ENCODE measurements at regions of chr20 and their contacts with region 1.

Region 1: DNA sequence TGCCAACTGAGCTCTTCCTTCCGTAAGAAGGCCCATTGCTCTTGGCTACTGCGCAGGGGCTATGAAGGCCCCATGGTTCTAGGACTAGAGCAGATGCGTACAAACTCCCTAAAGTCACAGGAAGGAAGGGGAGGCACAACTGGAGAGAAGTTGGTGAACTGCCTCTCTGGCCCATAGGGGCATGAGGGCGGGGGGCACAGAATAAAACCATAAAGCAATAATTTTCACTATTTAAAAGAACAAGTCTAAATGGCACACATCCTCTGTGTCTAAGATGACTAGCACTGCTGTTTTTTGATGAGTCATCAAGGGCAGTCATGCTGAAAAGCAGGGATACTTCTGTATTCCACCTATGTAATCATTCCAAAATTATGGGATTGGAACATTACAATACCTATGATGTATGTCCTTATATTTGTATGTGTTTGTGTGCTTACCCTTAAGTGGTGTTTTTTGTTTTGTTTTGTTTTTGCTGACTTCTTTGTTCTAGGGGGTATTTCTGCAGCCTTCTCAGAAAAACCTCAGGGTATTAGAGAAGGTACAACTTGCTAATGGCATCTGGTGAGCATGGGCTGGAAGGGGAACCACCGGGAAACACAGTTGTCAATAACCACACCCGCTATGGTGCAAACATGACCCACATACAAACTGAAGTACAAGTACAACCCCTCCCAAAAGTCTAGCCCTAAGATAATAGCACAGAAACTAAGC is 36.9 kb downstream of the B4GALT5 start:
- DNase-seq: no peak
- ATAC-seq: peak; percentile 88
- H3K4me3 ChIP-seq: no peak overlapping the region
- H3K4me3 Mint-ChIP-seq: peak overlapping the region in 2 of 10 donors; percentile 9 to 81
- H3K27ac ChIP-seq: no peak overlapping the region
- H3K27ac Mint-ChIP-seq: peak overlapping the region in 2 of 9 donors; percentile 6 to 83
- H3K4me1 ChIP-seq: peaks cover 0 to 66% of the 10 kb centered on the region in 2 donors
- H3K4me1 Mint-ChIP-seq: peaks cover 10 to 79% (median 32%) of the 10 kb centered on the region in 7 donors
- H3K27me3 ChIP-seq: no peaks in the 10 kb centered on the region
- H3K27me3 Mint-ChIP-seq: no peaks in the 10 kb centered on the region

Region 2: DNA sequence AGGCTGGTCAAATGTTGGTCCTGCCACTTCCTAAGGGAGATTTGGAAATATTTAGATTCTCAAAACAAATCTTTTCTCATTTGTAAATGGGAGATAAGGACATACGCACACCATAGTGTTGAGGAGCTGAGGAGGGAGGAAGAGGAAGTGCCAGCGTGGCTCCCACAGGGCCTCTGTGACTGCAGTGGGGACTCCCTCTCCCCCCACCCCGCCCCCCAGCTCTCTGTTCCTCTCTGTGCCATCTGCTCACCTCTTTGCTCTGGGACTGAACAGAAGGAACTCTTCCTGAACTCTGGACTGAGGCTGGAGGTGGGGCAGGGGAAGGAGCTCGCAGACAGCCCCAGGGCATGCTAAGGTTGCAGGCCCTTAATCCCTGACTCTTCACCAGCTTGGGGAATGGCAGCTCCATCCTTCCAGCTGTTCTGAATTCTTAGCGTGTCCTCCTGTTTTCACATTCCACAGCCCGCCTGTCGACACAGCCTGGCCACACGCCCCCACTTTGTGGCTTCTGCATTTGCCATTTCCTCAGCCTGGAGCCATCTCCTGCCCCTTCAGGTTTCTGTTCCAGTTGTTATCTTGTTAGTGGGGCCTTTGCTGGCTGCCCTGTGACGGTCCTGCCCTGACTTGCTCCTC is 446.1 kb before region 1 on chr20:
- CTCF ChIA-PET with region 1: no interaction called
- POLR2A ChIA-PET with region 1: no interaction called
- intact Hi-C with region 1: no loop called
- DNase-seq: no peak
- ATAC-seq: peak; percentile 70
- H3K4me3 ChIP-seq: no peak overlapping the region
- H3K4me3 Mint-ChIP-seq: no peak overlapping the region
- H3K27ac ChIP-seq: no peak overlapping the region
- H3K27ac Mint-ChIP-seq: peak overlapping the region in 4 of 9 donors; percentile 2 to 66 (median 43)
- H3K4me1 ChIP-seq: no peaks in the 10 kb centered on the region
- H3K4me1 Mint-ChIP-seq: peaks cover 0 to 10% (median 5%) of the 10 kb centered on the region in 7 donors
- H3K27me3 ChIP-seq: no peaks in the 10 kb centered on the region
- H3K27me3 Mint-ChIP-seq: no peaks in the 10 kb centered on the region

Region 3: DNA sequence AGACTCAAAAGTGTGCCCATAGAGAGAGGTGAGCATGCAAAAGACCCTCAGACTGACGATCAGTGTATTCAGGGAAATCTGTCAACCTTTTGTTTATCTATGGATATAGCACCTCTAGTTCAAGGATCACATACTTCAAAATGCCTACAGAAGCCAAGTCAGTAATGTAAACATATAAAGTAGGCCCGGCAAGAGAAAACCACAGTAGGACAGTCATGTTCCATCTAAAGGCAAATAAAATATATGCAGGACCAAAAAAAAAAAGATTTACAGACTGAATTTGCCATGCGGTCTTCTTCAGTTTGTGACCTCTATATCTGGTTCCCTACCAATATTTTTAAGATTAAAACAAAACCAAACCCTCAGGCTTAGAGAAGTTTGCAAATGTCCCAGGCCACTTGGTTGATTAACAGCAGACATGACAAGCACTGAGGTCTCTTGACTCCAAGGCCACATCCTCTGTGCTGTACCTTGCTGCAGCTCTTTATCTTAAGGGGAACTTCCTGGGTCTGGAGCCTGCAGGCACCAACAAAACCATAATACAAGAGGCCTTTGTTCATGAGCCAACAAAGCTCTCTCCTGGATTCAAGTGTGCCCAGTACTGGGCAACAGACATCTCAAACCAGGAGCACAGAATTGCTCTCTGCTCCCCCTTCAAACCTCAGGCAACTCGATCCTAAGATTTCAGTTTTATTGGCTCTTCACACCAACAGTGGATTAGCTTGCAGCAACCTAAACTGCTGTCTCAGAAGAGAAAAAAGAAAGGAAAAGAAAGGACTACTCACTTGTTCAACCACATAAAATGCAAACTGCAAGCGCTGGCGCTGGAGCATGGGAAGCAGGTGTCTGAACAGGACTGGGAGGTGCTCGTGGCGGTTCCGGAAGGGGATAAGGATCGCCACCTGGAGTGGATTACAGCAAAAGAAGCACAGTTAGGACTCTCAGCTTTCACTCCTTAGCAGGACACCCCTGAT is 34.8 kb before region 1 on chr20:
- CTCF ChIA-PET with region 1: no interaction called
- POLR2A ChIA-PET with region 1: no interaction called
- intact Hi-C with region 1: loop called in 1 of 2 experiments (anchors 5 kb)
- DNase-seq: no peak
- ATAC-seq: no peak
- H3K4me3 ChIP-seq: no peak overlapping the region
- H3K4me3 Mint-ChIP-seq: peak overlapping the region in 1 of 10 donors; percentile 14
- H3K27ac ChIP-seq: no peak overlapping the region
- H3K27ac Mint-ChIP-seq: peak overlapping the region in 2 of 9 donors; percentile 59 to 79
- H3K4me1 ChIP-seq: no peaks in the 10 kb centered on the region
- H3K4me1 Mint-ChIP-seq: peaks cover 0 to 20% (median 0%) of the 10 kb centered on the region in 7 donors
- H3K27me3 ChIP-seq: no peaks in the 10 kb centered on the region
- H3K27me3 Mint-ChIP-seq: no peaks in the 10 kb centered on the region

Region 4: DNA sequence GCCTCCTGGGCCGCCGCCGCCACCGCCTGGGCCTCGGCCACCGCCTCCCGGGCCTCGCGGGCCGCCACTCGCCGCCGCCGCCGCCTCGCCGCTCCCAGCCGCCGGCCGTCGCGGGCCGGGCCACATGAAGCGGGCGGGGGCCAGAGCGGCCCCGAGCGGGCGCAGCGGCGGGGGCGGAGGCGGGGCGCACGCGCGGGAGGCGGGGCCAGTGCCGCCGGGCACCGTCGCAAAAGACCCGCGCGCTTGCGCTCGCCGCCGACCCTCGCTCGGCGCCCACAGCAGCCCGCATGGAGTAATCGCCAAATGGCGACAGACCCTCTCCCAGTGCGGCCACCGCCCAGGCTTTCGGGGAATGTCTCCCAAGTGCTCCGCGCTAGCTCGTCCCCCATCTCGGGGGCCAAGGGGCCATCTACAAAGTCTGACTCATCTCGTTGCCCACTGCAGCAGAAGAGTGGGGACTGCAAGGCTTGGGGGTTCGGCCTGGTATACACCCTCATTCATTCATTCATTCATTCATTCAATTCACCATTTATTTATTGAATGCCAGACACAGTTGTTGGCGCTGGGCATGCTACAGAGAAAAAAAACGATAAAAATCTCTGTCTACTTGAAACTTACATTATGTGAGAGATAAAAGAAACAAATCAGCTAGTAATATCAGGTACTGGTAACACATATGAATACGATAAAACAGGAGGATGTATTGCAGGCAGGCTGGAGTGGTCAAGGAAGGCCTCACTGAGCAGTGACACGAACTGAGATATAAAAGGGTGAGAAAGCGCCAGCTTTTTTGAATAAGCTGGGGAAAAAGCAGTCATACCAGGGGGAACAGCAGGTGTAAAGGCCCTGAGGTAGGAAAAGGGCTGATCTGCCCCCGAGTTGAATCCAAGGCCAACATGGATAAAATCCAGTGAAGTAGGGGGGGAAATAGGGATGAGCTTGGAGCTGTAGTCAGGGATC is 37.3 kb after region 1 on chr20 and contains the start of gene B4GALT5:
- CTCF ChIA-PET with region 1: no interaction called
- POLR2A ChIA-PET with region 1: no interaction called
- intact Hi-C with region 1: loop called in 1 of 2 experiments (anchors 5 kb)
- DNase-seq: peak in 8 of 9 donors; percentile 26 to 82 (median 47)
- ATAC-seq: peak; percentile 90
- H3K4me3 ChIP-seq: peak within 1 kb of the TSS; percentile 67
- H3K4me3 Mint-ChIP-seq: peak within 1 kb of the TSS; percentile 86 to 93 (median 90)
- H3K27ac ChIP-seq: peak within 1 kb of the TSS; percentile 66
- H3K27ac Mint-ChIP-seq: peak within 1 kb of the TSS; percentile 53 to 89 (median 81)
- H3K4me1 ChIP-seq: peaks cover 7 to 15% of the 10 kb centered on the region in 2 donors
- H3K4me1 Mint-ChIP-seq: peaks cover 26 to 43% (median 38%) of the 10 kb centered on the region in 7 donors
- H3K27me3 ChIP-seq: no peaks in the 10 kb centered on the region
- H3K27me3 Mint-ChIP-seq: peaks cover 0 to 4% (median 0%) of the 10 kb centered on the region in 5 donors
- total RNA-seq, gene B4GALT5: 3.3 to 23.1 (median 4.6) TPM